ENCODE measurements at regions of chr3 and their contacts with region 1.

Region 1: DNA sequence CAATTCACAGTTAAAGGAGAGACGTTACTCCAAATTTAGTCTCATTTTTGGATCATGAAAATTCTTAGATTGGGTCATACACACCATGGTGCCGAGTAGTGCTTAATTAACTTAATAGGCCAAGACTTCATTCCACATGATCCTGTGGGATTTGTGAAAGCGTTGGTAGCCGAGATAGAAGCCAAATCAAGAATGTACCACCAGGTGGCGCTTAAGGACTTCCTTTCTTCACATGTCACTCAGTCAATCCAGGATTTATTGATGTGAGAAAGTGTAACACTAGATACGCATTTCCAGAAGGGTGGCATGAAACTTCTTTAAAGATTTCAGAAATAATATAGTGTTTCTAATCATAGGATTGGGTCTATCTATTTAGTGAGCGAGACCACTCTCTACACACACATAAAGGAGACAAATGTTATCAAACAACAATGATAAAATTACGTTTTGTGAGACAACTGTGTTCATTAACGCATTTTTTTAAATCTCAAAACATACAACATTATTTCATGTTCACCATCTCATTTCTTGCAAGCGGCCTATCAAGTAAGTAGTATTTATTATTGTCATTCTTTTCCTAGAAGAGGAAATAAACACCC is 436.1 kb downstream of the CHL1 start:
- DNase-seq: peak; percentile 60
- H3K4me3 Mint-ChIP-seq: no peak overlapping the region
- H3K27ac Mint-ChIP-seq: no peak overlapping the region
- H3K4me1 Mint-ChIP-seq: no peaks in the 10 kb centered on the region
- H3K27me3 Mint-ChIP-seq: peaks cover 1% of the 10 kb centered on the region

Region 2: GRCh38 chr3:804211-804610 is 171.5 kb after region 1 on chr3:
- CTCF ChIA-PET with region 1: no interaction called
- intact Hi-C with region 1: no loop called
- DNase-seq: no peak
- H3K4me3 Mint-ChIP-seq: no peak overlapping the region
- H3K27ac Mint-ChIP-seq: no peak overlapping the region
- H3K4me1 Mint-ChIP-seq: no peaks in the 10 kb centered on the region
- H3K27me3 Mint-ChIP-seq: no peaks in the 10 kb centered on the region

Region 3: GRCh38 chr3:851098-851795 is 218.6 kb after region 1 on chr3:
- CTCF ChIA-PET with region 1: no interaction called
- intact Hi-C with region 1: loop called (anchors 5 kb)
- DNase-seq: peak; percentile 30
- H3K4me3 Mint-ChIP-seq: no peak overlapping the region
- H3K27ac Mint-ChIP-seq: no peak overlapping the region
- H3K4me1 Mint-ChIP-seq: no peaks in the 10 kb centered on the region
- H3K27me3 Mint-ChIP-seq: no peaks in the 10 kb centered on the region

Region 4: DNA sequence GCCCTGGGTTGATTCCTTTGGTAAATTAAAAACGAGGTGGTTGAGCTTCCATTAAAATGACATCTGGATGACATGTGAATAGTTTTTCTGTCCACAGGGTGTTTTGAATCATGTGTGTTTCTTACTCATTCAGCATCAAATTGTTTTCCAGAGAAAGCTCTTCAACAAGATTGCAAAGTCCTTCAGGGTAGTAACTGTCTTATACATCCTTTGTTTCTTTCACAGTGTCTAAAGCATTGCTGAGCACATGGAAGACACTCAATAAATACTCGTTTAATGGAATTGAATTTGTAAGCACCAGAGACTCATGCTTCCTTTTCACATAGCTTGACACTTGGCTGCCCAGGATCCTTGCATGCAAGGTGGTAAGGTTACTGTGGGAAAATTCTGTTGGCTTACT is 237.1 kb after region 1 on chr3:
- CTCF ChIA-PET with region 1: no interaction called
- intact Hi-C with region 1: no loop called
- DNase-seq: no peak
- H3K4me3 Mint-ChIP-seq: no peak overlapping the region
- H3K27ac Mint-ChIP-seq: no peak overlapping the region
- H3K4me1 Mint-ChIP-seq: no peaks in the 10 kb centered on the region
- H3K27me3 Mint-ChIP-seq: no peaks in the 10 kb centered on the region

Region 5: GRCh38 chr3:2156244-2156847 is 1523.7 kb after region 1 on chr3:
- CTCF ChIA-PET with region 1: no interaction called
- intact Hi-C with region 1: loop called (anchors 1 kb)
- DNase-seq: peak; percentile 8
- H3K4me3 Mint-ChIP-seq: no peak overlapping the region
- H3K27ac Mint-ChIP-seq: no peak overlapping the region
- H3K4me1 Mint-ChIP-seq: no peaks in the 10 kb centered on the region
- H3K27me3 Mint-ChIP-seq: peaks cover 3% of the 10 kb centered on the region